ENCODE measurements at regions of chr2 and their contacts with region 1.

Region 1: GRCh38 chr2:197705121-197705911 is at the start of gene MARS2:
- DNase-seq: peak; percentile 96
- total RNA-seq, gene MARS2: 6.7 TPM

Region 2: DNA sequence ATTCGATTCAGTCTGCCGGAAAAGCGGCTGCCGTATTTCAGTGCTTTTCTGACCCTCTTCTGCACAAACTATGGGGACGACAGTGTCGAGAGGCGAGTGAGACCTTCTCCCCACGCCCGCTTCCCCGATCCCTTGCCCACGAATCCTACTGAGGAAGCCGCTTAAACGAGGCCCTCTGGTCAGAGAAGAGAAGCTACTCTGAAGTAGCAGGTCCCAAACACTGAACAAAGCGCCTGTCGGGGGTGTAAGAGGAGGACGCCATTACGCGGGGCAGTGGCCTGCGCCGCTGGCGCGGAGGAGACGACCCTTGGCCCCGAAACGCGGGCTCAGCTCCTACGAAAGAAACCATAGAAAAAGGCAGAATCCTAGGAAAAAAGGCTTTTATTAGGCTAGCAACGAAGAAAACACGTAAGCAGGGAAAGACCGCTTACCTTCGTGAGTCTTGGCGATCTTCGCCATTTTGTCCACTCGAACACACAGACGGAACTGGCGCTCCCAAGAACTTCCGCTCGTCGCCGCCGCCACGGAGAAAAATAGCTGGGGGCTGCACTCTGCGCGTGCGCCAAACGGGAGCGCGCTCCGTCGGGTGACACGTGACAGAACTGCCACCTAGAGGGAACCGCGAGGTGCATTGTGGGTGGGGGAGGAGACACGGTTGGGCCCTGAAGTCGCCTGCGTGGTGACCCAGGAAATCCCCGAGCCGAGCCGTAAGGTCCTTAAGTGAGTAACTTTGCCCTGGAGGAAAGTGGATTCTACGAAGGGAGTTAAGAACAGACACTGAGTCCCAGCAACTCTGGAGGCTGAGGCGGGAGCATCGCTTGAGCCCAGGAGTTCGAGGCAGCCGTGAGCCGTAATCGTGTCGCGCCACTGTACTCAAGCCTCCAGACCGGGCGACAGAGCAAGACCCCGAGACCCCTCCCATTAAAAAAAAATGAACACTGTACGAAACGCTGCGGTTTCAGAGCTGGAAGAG is 270.5 kb before region 1 on chr2 and contains the start of gene SF3B1:
- intact Hi-C with region 1: loop called (anchors 5 kb)
- DNase-seq: peak; percentile 99
- total RNA-seq, gene SF3B1: 144 TPM

Region 3: GRCh38 chr2:197499594-197500526 is 205.5 kb before region 1 on chr2 and contains the starts of genes HSPD1 and HSPE1:
- intact Hi-C with region 1: loop called (anchors 5 kb)
- DNase-seq: peak; percentile 98
- total RNA-seq, gene HSPD1: 144 TPM
- total RNA-seq, gene HSPE1: 88.3 TPM

Region 4: GRCh38 chr2:197661626-197662025 is 43.7 kb before region 1 on chr2:
- intact Hi-C with region 1: no loop called
- DNase-seq: no peak

Region 5: GRCh38 chr2:197673106-197673505 is 32.2 kb before region 1 on chr2:
- intact Hi-C with region 1: loop called (anchors 2 kb)
- DNase-seq: no peak

Region 6: DNA sequence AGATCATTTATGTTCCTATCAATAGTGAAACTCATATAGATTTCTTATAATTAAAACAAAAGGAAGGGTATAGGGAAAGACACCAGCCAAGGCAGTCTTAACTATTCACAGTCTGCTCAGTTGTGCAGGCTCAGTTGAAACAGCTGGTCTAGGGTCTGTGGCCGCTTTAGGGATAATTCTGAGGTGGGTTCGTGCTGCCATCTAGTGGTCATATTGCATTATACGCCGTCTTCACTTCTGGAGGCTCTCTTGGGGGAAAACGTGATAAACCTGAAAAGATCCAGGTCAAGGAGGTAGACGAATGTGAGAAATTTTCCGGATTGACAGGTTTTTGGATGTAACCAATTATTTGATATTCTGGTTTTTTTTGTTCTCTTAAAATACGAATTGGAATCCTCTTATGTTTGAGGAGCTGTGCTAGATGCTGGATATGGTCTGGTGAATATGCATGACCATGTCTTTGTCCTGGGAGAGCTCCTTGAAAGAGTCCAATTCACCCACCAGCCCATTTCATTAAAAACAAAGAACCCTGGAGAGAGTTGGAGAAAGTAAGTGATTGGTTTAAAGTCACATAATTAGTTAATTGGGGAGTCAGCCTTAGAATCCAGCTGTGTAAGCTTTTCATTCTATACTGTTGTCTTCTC is 591.5 kb after region 1 on chr2:
- intact Hi-C with region 1: loop called (anchors 2 kb)
- DNase-seq: no peak